ENCODE measurements at regions of chr11 and their contacts with region 1.

Region 1: DNA sequence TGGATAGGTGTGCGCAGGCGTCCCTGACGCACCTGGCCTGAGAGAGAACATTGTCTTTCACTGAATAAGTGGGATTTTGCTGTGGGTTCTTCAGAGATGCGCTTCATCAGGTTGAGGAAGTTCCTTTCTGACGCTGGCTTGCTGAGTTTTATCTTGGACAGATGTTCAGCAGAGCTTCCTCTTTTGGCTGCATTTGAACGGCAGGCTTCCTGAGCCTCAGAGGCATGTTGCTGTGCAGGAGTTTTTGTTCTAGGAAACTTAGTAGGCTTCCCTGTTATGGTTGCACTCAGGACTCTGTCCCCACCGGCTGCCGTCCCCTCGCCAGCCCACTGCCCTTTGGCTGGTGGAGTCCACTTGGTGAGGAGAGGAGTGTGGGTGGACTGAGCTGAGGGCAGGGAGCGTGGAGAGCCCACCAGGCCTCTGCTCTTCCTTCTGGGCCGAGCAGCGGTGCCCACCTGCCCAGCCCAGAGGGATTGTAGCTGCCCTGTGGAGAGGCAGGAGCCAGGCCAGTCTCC is 17.2 kb downstream of the FRMD8 start:
- DNase-seq: peak; percentile 94
- H3K4me3 ChIP-seq: peak overlapping the region; percentile 45
- H3K27ac ChIP-seq: peak overlapping the region; percentile 90
- H3K4me1 ChIP-seq: peaks cover 53% of the 10 kb centered on the region
- CTCF ChIP-seq: no peak

Region 2: DNA sequence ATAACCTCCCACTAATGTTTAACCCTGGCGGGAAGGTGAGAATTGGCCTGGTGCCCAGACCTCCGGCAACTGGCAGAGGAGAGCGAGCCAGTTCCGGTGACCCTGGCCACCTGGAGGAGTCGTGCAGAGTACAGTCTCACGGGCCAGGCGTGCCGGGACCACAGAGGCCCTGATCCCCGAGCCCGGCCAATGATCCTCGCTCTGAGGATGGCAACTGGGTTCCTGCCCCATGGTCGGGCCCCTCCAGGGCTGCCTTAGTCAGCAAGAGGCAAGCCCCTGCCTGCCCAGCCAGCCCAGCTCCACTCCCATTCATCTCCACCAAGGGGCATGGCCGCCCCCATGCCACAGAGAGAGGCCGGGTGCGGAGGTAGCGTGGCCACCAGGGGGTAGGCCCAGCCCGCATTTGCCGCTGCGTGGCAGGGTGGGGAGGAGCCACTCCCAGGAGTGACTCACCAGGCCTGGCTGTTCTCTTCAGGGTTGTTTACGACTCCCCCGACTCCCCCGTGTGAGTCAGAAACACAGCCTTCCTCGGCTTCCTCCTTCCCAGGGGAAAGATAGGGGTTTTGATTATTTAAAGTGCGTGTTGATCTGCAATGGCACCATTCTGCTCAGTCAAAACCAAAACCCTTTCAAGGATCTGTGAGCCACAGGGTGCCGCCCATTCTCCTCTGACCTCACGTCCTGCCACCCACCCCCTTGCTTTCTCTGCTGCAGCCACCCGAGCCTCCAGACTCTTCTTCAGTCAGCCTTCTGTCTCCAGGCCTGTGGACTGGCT is 21.4 kb before region 1 on chr11 and contains the start of gene SLC25A45:
- CTCF ChIA-PET with region 1: interaction called, 3 read pairs
- POLR2A ChIA-PET with region 1: interaction called, 4 read pairs
- intact Hi-C with region 1: loop called (anchors 2 kb)
- DNase-seq: peak; percentile 86
- H3K4me3 ChIP-seq: peak within 1 kb of the TSS; percentile 68
- H3K27ac ChIP-seq: peak within 1 kb of the TSS; percentile 52
- H3K4me1 ChIP-seq: peaks cover 51% of the 10 kb centered on the region
- CTCF ChIP-seq: peak; percentile 84
- total RNA-seq, gene SLC25A45: 5.9 and 7.0 TPM in 2 replicates